ENCODE measurements at regions of chr4 and their contacts with region 1.

Region 1: GRCh38 chr4:76982321-76983190 is 33.0 kb downstream of the SEPTIN11 start:
- DNase-seq: no peak
- H3K4me3 Mint-ChIP-seq: peak overlapping the region; percentile 37
- H3K27ac Mint-ChIP-seq: peak overlapping the region; percentile 4
- H3K4me1 Mint-ChIP-seq: peaks cover 44% of the 10 kb centered on the region
- H3K27me3 Mint-ChIP-seq: peaks cover 25% of the 10 kb centered on the region

Region 2: GRCh38 chr4:76960014-76960413 is 22.5 kb before region 1 on chr4:
- intact Hi-C with region 1: loop called (anchors 2 kb)
- DNase-seq: peak; percentile 63
- H3K4me3 Mint-ChIP-seq: no peak overlapping the region
- H3K27ac Mint-ChIP-seq: no peak overlapping the region
- H3K4me1 Mint-ChIP-seq: peaks cover 11% of the 10 kb centered on the region
- H3K27me3 Mint-ChIP-seq: peaks cover 57% of the 10 kb centered on the region